ENCODE measurements at regions of chr4 and their contacts with region 1.

Region 1: GRCh38 chr4:183504064-183504929 is 561 bp upstream of the ING2 start:
- DNase-seq: peak; percentile 99
- H3K4me3 ChIP-seq: peak overlapping the region; percentile 88 to 98 (median 98)
- H3K27ac ChIP-seq: peak overlapping the region; percentile 93
- H3K4me1 ChIP-seq: peaks cover 13% of the 10 kb centered on the region
- H3K27me3 ChIP-seq: no peaks in the 10 kb centered on the region
- CTCF ChIP-seq: peak in 1 of 2 donors; percentile 36

Region 2: DNA sequence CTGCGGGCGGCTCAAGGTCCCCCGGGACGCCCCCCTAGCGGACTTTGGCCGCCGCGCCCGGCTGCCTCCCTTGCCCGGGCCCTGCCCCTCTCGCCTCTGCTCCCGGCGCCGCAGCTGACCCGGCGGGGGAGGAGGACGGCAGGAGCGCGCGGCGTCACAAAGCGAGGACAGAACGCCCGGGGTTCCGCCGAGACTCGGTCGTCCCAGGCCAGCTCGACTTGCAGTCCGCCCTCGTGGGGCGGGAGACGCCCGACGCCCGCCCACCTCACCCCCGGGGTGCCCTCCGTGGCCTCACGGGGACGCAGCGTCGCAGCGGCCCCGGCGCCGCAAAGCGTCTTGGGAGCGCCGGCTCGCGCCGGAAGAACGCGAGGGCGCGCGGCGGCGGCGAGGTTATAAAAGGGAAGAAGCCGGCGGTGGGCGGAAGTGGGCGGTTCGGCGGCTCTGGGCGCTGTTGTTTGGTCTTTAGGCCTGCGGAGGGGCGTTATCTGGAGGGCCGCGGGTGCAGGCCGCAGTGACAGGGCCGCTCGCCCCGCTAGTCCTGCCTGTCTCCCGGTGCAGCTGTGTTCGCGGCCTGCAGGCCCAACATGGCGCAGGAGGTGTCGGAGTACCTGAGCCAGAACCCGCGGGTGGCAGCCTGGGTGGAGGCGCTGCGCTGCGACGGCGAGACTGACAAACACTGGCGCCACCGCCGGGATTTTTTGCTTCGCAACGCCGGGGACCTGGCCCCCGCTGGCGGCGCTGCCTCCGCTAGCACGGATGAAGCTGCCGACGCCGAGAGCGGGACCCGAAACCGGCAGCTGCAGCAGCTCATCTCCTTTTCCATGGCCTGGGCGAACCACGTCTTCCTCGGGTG is 59.9 kb before region 1 on chr4 and contains the start of gene CDKN2AIP:
- CTCF ChIA-PET with region 1: no interaction called
- dilution Hi-C with region 1: no loop called
- in situ Hi-C with region 1: no loop called
- intact Hi-C with region 1: loop called (anchors 2 kb)
- DNase-seq: peak; percentile 97
- H3K4me3 ChIP-seq: peak within 1 kb of the TSS; percentile 58 to 95 (median 95)
- H3K27ac ChIP-seq: peak within 1 kb of the TSS; percentile 96
- H3K4me1 ChIP-seq: peaks cover 14% of the 10 kb centered on the region
- H3K27me3 ChIP-seq: no peaks in the 10 kb centered on the region
- CTCF ChIP-seq: peak in 1 of 2 donors; percentile 18
- total RNA-seq, gene CDKN2AIP: 12.7 to 14.3 TPM

Region 3: GRCh38 chr4:183471946-183472708 is 32.2 kb before region 1 on chr4:
- CTCF ChIA-PET with region 1: no interaction called
- dilution Hi-C with region 1: no loop called
- in situ Hi-C with region 1: no loop called
- intact Hi-C with region 1: loop called (anchors 1 kb)
- DNase-seq: peak; percentile 50
- H3K4me3 ChIP-seq: no peak overlapping the region
- H3K27ac ChIP-seq: no peak overlapping the region
- H3K4me1 ChIP-seq: peaks cover 33% of the 10 kb centered on the region
- H3K27me3 ChIP-seq: no peaks in the 10 kb centered on the region
- CTCF ChIP-seq: peak; percentile 73 to 85

Region 4: DNA sequence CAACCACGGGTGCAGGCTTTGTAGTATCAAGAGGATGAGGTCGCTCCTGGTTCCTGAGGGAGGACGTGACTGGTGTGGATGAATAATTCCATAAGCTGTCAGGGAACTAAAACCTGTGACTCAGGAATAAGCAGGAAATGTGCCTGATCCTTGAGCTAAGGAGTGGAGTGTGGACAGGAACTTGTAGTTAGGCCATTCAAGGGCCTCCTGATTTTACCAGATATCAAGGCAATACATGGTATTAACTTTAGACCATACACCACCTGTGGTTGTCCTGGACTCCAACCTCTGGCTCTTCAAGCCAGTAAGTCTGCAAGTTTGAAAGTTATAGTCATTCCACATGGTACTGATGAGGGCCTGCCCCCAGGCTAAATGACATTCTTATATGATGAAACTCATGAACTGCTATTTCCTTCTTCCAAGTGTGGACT is 11.5 kb before region 1 on chr4:
- CTCF ChIA-PET with region 1: no interaction called
- dilution Hi-C with region 1: no loop called
- in situ Hi-C with region 1: no loop called
- intact Hi-C with region 1: loop called (anchors 1 kb)
- DNase-seq: peak; percentile 86
- H3K4me3 ChIP-seq: no peak overlapping the region
- H3K27ac ChIP-seq: peak overlapping the region; percentile 57
- H3K4me1 ChIP-seq: peaks cover 27% of the 10 kb centered on the region
- H3K27me3 ChIP-seq: no peaks in the 10 kb centered on the region
- CTCF ChIP-seq: no peak

Region 5: DNA sequence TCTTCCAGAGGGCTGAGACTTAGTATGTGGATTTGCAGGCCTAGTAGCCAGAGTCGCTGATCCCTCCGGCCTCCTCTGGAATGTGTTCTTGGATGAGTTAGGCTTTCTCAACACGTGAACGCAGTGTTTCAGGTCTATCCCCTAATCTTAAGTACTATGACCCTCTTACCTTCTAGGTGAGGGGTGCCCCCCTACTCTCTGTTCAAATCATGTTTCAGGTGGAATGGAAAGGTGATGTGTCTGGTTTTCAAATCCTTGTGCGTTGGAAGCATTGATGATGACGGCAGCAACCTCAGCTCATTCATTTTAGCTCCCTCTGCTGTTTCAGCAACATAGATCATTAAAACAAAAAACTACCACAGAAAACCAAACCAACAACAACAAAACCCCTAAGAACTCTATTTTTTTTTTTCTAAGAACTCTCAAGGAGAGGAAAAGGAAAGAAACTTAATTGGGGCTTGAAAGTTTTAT is 98.3 kb after region 1 on chr4:
- CTCF ChIA-PET with region 1: interaction called, 6 read pairs
- dilution Hi-C with region 1: no loop called
- in situ Hi-C with region 1: no loop called
- intact Hi-C with region 1: loop called (anchors 2 kb)
- DNase-seq: peak; percentile 12
- H3K4me3 ChIP-seq: no peak overlapping the region
- H3K27ac ChIP-seq: no peak overlapping the region
- H3K4me1 ChIP-seq: no peaks in the 10 kb centered on the region
- H3K27me3 ChIP-seq: no peaks in the 10 kb centered on the region
- CTCF ChIP-seq: peak in 1 of 2 donors; percentile 46

Region 6: GRCh38 chr4:183659029-183659871 is 155.0 kb after region 1 on chr4 and contains the starts of genes RWDD4 and TRAPPC11:
- CTCF ChIA-PET with region 1: no interaction called
- dilution Hi-C with region 1: no loop called
- in situ Hi-C with region 1: loop called in 1 of 2 experiments (anchors 25 kb)
- intact Hi-C with region 1: loop called (anchors 1 kb)
- DNase-seq: peak; percentile 99
- H3K4me3 ChIP-seq: peak within 1 kb of the TSS; percentile 74 to 95 (median 81)
- H3K27ac ChIP-seq: peak within 1 kb of the TSS; percentile 80
- H3K4me1 ChIP-seq: peaks cover 6% of the 10 kb centered on the region
- H3K27me3 ChIP-seq: no peaks in the 10 kb centered on the region
- CTCF ChIP-seq: peak in 1 of 2 donors; percentile 28
- total RNA-seq, gene RWDD4: 23.3 to 24.0 TPM
- total RNA-seq, gene TRAPPC11: 33.3 to 42.3 TPM

Region 7: GRCh38 chr4:184529283-184529682 is 1025.0 kb after region 1 on chr4:
- CTCF ChIA-PET with region 1: no interaction called
- dilution Hi-C with region 1: no loop called
- in situ Hi-C with region 1: no loop called
- intact Hi-C with region 1: loop called (anchors 5 kb)
- DNase-seq: peak; percentile 98
- H3K4me3 ChIP-seq: no peak overlapping the region
- H3K27ac ChIP-seq: peak overlapping the region; percentile 86
- H3K4me1 ChIP-seq: peaks cover 27% of the 10 kb centered on the region
- H3K27me3 ChIP-seq: no peaks in the 10 kb centered on the region
- CTCF ChIP-seq: peak in 1 of 2 donors; percentile 15